ENCODE measurements at regions of chr2 and their contacts with region 1.

Region 1: DNA sequence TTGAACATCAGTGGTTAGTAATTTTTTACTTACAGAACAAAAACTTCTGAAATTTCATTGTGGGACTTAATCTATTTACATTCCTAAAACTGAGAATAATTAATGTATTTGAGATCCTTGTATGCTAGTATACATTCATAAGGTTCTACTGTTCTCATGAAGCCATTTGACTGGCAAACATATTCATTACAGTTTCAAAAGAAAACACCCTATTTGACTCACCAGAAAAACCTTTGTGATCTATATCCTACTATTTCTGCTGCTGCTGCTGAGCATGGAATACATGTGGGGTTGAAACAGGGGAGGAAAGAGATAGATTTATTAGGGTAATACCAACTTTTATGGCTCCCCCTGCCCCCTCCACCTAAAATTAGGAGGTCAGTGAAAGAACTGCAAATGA is 21.8 kb downstream of the MARS2 start:
- DNase-seq: no peak
- CTCF ChIP-seq: no peak

Region 2: DNA sequence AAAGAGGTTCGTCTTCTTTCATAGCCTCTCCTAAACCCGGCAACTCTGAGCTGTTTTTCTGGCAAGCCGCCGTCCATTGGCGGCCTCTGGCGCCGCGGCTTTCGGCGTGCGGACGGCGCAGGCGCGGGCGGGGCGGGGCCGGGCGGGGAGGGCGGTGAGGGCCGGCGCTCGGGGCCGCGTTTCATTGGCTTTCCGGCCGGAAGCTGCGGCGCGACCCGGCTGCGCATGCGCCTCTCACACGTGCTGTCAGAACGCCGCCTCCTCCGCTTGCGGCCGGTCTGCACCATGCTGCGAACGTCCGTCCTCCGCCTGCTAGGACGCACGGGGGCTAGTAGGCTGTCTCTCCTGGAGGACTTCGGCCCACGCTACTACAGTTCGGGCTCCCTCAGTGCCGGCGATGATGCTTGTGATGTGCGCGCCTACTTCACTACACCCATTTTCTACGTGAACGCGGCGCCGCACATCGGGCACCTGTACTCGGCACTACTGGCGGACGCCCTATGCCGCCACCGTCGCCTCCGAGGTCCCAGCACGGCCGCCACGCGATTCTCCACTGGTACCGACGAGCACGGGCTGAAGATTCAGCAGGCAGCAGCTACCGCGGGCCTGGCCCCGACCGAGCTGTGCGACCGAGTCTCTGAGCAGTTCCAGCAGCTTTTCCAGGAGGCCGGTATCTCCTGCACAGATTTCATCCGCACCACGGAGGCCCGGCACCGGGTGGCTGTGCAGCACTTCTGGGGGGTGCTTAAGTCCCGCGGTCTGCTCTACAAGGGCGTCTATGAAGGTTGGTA is 21.7 kb before region 1 on chr2 and contains the start of gene MARS2:
- CTCF ChIA-PET with region 1: interaction called, 11 read pairs
- POLR2A ChIA-PET with region 1: no interaction called
- DNase-seq: peak; percentile 97
- CTCF ChIP-seq: no peak

Region 3: GRCh38 chr2:197740200-197740599 is 13.2 kb after region 1 on chr2:
- CTCF ChIA-PET with region 1: no interaction called
- POLR2A ChIA-PET with region 1: interaction called, 10 read pairs
- DNase-seq: no peak
- CTCF ChIP-seq: no peak

Region 4: DNA sequence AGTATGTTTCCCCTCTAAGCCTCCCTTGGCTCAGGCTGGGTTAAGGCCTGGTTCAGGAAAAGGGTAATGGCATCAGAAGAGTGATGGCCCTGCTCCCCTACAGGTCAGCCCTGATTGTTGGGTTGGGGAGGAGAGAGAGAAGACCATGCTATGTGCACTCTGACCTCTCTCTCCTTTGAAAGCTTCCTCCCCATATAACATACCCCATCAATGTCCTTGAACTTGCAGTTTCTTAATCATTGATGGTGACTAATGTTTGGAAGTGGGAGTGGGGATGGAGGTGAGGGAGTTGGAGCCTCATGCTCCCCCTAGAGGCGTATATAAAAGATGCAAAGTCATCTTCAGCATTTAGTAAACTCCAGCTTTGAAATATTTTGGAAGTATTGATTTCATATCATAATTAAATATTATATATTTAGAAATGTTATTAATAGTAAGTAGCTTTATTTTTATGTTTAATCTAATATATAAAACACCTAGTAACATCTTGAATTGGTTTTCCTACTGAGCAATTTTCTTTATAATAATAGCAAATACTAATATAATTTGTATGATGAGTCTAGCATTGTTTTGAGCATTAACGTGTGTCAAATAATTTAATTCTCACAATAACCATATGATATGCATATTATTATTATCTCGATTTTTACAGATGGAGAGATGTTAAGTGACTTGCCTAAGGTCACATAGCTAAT is 86.2 kb after region 1 on chr2:
- CTCF ChIA-PET with region 1: no interaction called
- POLR2A ChIA-PET with region 1: no interaction called
- DNase-seq: peak; percentile 14
- CTCF ChIP-seq: peak; percentile 48

Measured in GM10248 (cell line).